ENCODE measurements at regions of chr10 and their contacts with region 1.

Region 1: DNA sequence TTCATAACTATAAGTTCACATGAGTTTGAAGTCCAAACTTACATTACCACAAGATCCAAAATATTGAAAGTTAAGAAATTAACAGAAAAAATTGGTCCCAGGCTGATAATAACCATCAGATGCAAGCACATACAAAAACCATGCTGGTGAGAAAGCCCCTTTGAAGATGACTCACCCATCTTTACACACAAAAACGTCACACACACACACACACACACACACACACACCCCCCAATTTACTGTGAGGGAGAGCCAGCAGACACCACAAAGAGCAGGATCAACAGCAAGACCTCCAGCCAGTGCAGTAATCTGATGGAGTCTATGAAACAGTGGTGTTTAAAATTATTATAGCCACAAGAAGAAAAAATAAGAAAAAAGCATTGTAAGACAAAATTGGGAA is 50.1 kb upstream of the DRGX start:
- DNase-seq: no peak
- H3K4me3 ChIP-seq: no peak overlapping the region
- H3K27ac ChIP-seq: no peak overlapping the region
- H3K4me1 ChIP-seq: no peaks in the 10 kb centered on the region
- H3K27me3 ChIP-seq: no peaks in the 10 kb centered on the region
- CTCF ChIP-seq: no peak
- POLR2A ChIP-seq: no peak

Region 2: GRCh38 chr10:49218480-49218879 is 227.6 kb before region 1 on chr10:
- intact Hi-C with region 1: loop called (anchors 10 kb)
- DNase-seq: no peak
- H3K4me3 ChIP-seq: no peak overlapping the region
- H3K27ac ChIP-seq: no peak overlapping the region
- H3K4me1 ChIP-seq: no peaks in the 10 kb centered on the region
- H3K27me3 ChIP-seq: no peaks in the 10 kb centered on the region
- CTCF ChIP-seq: no peak
- POLR2A ChIP-seq: no peak

Region 3: DNA sequence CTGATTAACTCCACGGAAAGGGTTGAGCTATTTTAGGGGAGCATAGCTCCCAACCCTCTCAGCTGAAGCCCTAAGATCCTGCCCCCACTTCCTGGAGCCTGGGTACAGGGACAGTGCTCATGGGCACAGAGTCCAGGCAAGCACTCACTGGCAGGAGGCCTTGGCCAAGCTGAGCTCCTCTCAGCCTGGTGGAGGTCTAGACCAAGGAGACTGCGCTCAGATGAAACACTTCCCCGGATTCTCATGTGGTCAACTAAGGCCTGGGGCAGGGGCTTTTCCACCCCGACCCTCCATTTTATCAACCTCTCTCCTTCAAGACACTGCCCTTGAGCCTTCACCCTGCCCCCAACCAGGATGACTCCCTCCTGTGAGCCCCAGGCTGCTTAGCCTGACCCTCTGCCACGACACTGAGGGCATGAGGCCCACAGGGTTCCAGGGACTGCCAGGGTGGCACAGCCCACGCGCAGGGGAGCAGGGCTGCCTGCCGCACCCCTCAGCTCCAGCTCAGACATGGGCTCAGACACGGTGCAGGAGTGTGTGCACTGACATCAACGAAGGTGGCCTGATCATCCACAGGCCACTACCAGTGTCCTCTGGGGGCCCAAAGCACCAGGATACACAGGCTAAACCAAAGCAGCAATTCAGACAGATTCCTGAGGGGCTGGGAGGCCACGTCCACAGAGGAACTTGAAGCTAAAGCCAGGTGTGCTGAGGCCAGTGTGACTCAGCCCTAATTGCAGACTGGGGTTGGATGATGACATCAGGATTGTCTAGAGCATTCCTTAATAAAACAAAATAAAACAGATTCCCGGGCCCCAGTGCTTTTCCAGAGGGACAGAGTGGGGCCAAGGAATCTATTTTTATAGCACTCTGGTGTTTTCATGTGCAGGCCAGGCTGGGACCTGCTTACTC is 186.6 kb after region 1 on chr10:
- intact Hi-C with region 1: no loop called
- DNase-seq: no peak
- H3K4me3 ChIP-seq: no peak overlapping the region
- H3K27ac ChIP-seq: no peak overlapping the region
- H3K4me1 ChIP-seq: no peaks in the 10 kb centered on the region
- H3K27me3 ChIP-seq: no peaks in the 10 kb centered on the region
- CTCF ChIP-seq: no peak
- POLR2A ChIP-seq: no peak

Measured in vagina (tissue), 2 donors.